ENCODE measurements at regions of chr16 and their contacts with region 1.

Region 1: GRCh38 chr16:21971856-21972255 is 18.7 kb downstream of the UQCRC2 start:
- DNase-seq: no peak
- ATAC-seq: no peak
- H3K4me3 ChIP-seq: no peak overlapping the region
- H3K27ac ChIP-seq: no peak overlapping the region
- H3K4me1 ChIP-seq: no peaks in the 10 kb centered on the region
- H3K27me3 ChIP-seq: no peaks in the 10 kb centered on the region
- CTCF ChIP-seq: no peak

Region 2: GRCh38 chr16:21523411-21524067 is 448.3 kb before region 1 on chr16:
- CTCF ChIA-PET with region 1: interaction called, 10 read pairs
- POLR2A ChIA-PET with region 1: no interaction called
- in situ Hi-C with region 1: no loop called
- intact Hi-C with region 1: no loop called
- DNase-seq: no peak
- ATAC-seq: no peak
- H3K4me3 ChIP-seq: no peak overlapping the region
- H3K27ac ChIP-seq: 0 out of 2 replicates have a peak overlapping the region, but pooled peaks have one; percentile 8
- H3K4me1 ChIP-seq: peaks cover 5% of the 10 kb centered on the region; the same call in 1 of the 2 replicates
- H3K27me3 ChIP-seq: no peaks in the 10 kb centered on the region
- CTCF ChIP-seq: no peak

Region 3: DNA sequence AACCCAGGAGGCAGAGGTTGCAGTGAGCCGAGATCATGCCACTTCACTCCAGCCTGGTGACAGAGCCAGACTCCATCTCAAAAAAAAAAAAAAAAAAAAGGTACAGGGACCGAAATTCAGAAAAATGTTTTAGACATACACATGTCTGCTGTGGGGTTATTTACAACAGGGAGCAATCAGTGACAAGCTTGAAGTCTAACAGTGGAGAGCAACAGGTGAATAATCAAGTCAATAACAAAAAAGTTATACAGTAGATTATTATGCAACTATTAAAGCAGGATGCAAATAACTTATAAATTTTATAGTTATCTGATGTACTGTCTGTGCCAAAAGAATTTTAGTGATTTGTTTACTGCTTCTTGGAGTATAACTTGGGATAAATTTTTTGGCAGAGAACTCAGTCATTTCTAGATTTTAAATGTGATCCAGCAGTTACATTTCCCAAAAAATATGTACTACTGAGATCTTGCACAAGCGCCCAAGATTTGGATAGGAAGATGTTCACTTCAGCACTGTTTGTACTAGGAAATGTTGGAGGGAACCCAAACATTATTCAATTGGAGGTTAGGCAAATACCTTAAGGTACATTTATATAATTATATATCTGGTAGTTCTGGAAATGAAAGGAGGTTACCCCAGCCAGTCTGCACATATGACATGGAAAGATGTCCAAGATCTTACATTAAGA is 268.3 kb after region 1 on chr16:
- CTCF ChIA-PET with region 1: no interaction called
- POLR2A ChIA-PET with region 1: no interaction called
- in situ Hi-C with region 1: no loop called
- intact Hi-C with region 1: no loop called
- DNase-seq: no peak
- ATAC-seq: no peak
- H3K4me3 ChIP-seq: no peak overlapping the region
- H3K27ac ChIP-seq: no peak overlapping the region
- H3K4me1 ChIP-seq: no peaks in the 10 kb centered on the region
- H3K27me3 ChIP-seq: no peaks in the 10 kb centered on the region
- CTCF ChIP-seq: no peak

Measured in Panc1 (cell line).